Adrenal gland (tissue), 19 donors: ENCODE measurements at regions of chr11 and their contacts with region 1.

Region 1: GRCh38 chr11:13210424-13210823 is 67.2 kb upstream of the BMAL1 start:
- DNase-seq: peak; percentile 71 to 90 (median 80)
- H3K4me3 ChIP-seq: no peak overlapping the region
- H3K27ac ChIP-seq: no peak overlapping the region
- H3K4me1 ChIP-seq: peaks cover 0 to 14% of the 10 kb centered on the region in 2 donors
- H3K27me3 ChIP-seq: no peaks in the 10 kb centered on the region
- CTCF ChIP-seq: peak; percentile 24 to 88 (median 74)
- POLR2A ChIP-seq: no peak

Region 2: DNA sequence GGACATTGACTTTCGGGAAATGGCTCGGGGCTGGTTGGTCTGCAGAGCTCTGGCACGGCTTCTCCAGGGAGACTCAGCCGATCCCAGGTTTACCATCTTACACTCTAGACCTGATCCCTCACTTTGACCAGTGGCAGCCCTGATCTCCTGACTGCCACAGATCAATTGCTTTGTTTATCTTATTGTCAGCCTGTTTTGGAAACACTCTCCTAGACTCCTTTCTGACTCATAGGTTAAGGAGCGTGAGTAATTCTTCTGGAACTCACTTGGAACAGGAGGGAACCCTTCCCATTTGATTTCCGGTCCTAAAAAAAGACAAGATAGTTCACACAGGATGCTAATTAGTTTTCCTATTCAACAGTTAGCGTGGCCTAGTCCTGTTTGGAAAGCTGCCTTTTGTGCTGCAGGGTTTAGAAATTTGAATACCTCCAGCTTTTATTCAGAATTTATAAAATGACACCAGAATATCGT is 51.2 kb after region 1 on chr11:
- intact Hi-C with region 1: loop called in 1 of 2 experiments (anchors 10 kb)
- DNase-seq: peak in 6 of 7 donors; percentile 24 to 59 (median 46)
- H3K4me3 ChIP-seq: no peak overlapping the region
- H3K27ac ChIP-seq: peak overlapping the region in 4 of 5 donors; percentile 74 to 91 (median 84)
- H3K4me1 ChIP-seq: peaks cover 17 to 22% of the 10 kb centered on the region in 2 donors
- H3K27me3 ChIP-seq: no peaks in the 10 kb centered on the region
- CTCF ChIP-seq: no peak
- POLR2A ChIP-seq: no peak

Region 3: GRCh38 chr11:13276832-13277767 is 66.7 kb after region 1 on chr11:
- intact Hi-C with region 1: no loop called
- DNase-seq: peak; percentile 98 to 99 (median 99)
- H3K4me3 ChIP-seq: peak overlapping the region; percentile 25 to 92 (median 88)
- H3K27ac ChIP-seq: peak overlapping the region; percentile 56 to 96 (median 78)
- H3K4me1 ChIP-seq: peaks cover 15 to 35% of the 10 kb centered on the region in 2 donors
- H3K27me3 ChIP-seq: no peaks in the 10 kb centered on the region
- CTCF ChIP-seq: peak in 4 of 6 experiments; percentile 7 to 24 (median 12)
- POLR2A ChIP-seq: peak; percentile 72 to 86

Region 4: GRCh38 chr11:13343931-13344717 is 133.7 kb after region 1 on chr11:
- intact Hi-C with region 1: loop called (anchors 5 kb)
- DNase-seq: peak; percentile 62 to 90 (median 73)
- H3K4me3 ChIP-seq: no peak overlapping the region
- H3K27ac ChIP-seq: no peak overlapping the region
- H3K4me1 ChIP-seq: peaks cover 0 to 17% of the 10 kb centered on the region in 2 donors
- H3K27me3 ChIP-seq: no peaks in the 10 kb centered on the region
- CTCF ChIP-seq: peak; percentile 77 to 88 (median 85)
- POLR2A ChIP-seq: no peak